ENCODE measurements at regions of chr7 and their contacts with region 1.

Region 1: DNA sequence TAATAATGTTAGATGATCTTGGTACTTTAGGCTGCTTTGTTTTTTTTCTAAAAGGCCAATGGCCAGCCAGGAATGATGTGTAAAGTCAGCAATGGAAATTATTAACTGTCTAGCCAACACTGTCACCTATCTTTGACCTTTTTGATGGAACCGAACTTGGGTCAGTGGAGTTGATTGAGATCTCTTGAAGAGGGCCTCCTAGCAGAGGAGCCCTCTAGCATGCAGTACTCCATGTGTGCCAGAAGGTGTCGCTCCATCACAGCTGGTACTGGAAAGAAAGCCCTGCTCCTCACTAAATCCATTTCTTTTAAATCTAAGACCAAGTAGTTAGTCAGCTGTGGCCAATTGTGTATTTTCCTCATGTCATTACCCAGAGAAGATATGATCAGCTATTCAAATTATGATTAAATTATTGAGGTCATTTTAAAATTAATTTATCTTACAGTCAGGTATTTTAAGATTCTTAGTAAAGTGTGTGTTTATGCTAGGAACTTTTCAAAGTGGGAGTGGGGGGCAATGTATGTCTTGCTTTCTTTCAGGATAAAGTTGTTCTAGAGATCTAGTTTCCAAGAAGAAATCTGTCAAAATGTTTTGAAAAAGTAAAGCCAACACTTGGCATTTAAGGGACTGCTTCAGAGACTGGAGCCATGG is 33.1 kb upstream of the CROT start:
- DNase-seq: no peak
- ATAC-seq: peak; percentile 91
- H3K4me3 ChIP-seq: no peak overlapping the region
- H3K27ac ChIP-seq: no peak overlapping the region
- H3K4me1 ChIP-seq: no peaks in the 10 kb centered on the region
- H3K27me3 ChIP-seq: no peaks in the 10 kb centered on the region
- CTCF ChIP-seq: peak; percentile 88

Region 2: DNA sequence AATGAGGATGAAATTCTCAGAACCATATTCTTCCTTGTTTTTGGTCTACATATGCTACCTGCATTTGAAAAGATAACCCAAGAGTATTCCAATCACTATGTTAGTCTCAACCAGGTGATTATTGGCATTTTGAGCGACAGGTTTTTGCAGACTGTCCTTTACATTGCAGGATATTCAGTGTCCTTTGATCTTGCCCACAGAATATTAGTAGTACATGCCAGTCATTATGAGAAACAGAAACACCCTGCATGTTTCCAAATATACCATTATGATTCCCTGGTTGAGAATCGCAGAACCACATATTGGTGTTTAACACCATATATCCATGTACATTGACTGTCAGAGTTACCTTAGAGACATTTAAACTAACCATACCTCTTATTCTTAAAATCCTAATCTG is 123.4 kb before region 1 on chr7:
- intact Hi-C with region 1: no loop called
- DNase-seq: no peak
- ATAC-seq: no peak
- H3K4me3 ChIP-seq: no peak overlapping the region
- H3K27ac ChIP-seq: no peak overlapping the region
- H3K4me1 ChIP-seq: no peaks in the 10 kb centered on the region
- H3K27me3 ChIP-seq: no peaks in the 10 kb centered on the region
- CTCF ChIP-seq: no peak

Region 3: GRCh38 chr7:87413951-87414799 is 101.8 kb after region 1 on chr7:
- intact Hi-C with region 1: loop called (anchors 5 kb)
- DNase-seq: no peak
- ATAC-seq: no peak
- H3K4me3 ChIP-seq: no peak overlapping the region
- H3K27ac ChIP-seq: no peak overlapping the region
- H3K4me1 ChIP-seq: no peaks in the 10 kb centered on the region
- H3K27me3 ChIP-seq: no peaks in the 10 kb centered on the region
- CTCF ChIP-seq: no peak

Measured in upper lobe of right lung (tissue), 1 donor.